GM12878 (cell line): ENCODE measurements at regions of chr11 and their contacts with region 1.

Region 1: DNA sequence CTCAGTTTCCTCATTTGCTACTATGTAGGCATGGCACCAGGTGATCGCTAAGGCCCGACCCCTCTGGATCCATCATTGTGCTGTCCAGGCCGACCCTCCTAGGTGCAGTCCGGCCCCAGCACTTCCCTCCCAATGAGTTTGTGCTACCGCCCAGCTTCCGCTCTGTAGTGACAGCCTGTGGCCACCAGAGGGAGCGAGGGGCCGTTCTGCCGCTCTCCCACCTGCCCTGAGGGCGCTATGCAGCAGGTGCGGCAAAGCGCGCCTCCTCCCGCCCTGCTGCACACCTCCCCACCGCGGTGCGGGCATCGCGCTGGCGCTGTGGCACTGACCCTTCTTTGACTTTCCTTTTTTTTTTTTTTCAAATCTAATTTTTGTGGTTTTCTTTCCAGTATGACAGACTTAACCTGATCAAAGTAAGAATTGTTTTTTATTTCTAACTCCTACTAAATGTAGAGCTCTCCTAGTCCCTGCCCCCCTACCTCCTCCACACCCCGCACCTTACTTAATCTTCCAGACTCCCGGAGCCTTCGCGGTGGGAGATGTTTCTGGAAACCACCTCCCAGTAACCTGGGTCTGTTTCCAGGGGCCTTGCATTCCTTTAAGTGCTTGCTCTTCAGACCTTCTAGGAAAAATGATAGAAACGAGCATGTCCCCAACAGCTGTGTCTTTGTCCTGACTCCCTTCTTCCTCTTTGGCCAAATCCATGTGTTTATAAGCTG is 73.7 kb downstream of the SCN3B start:
- DNase-seq: no peak
- ATAC-seq: peak; percentile 93
- H3K4me3 ChIP-seq: no peak overlapping the region
- H3K27ac ChIP-seq: no peak overlapping the region
- H3K4me1 ChIP-seq: peaks cover 9% of the 10 kb centered on the region
- H3K27me3 ChIP-seq: no peaks in the 10 kb centered on the region
- CTCF ChIP-seq: peak; percentile 94 to 100 (median 96)
- EP300 ChIP-seq: no peak
- POLR2A ChIP-seq: no peak
- RAD21 ChIP-seq: peak; percentile 71

Region 2: GRCh38 chr11:123110356-123110755 is 470.4 kb before region 1 on chr11:
- CTCF ChIA-PET with region 1: interaction called, 5 read pairs
- POLR2A ChIA-PET with region 1: no interaction called
- RAD21 ChIA-PET with region 1: no interaction called
- SMC1A ChIA-PET with region 1: no interaction called
- in situ Hi-C with region 1: no loop called
- intact Hi-C with region 1: loop called (anchors 5 kb)
- DNase-seq: no peak
- ATAC-seq: no peak
- H3K4me3 ChIP-seq: no peak overlapping the region
- H3K27ac ChIP-seq: no peak overlapping the region
- H3K4me1 ChIP-seq: no peaks in the 10 kb centered on the region
- H3K27me3 ChIP-seq: peaks cover 0 to 3% of the 10 kb centered on the region in 2 experiments; a peak in 2 of 4 replicates
- CTCF ChIP-seq: no peak
- EP300 ChIP-seq: no peak
- POLR2A ChIP-seq: no peak
- RAD21 ChIP-seq: no peak

Region 3: GRCh38 chr11:123505546-123506299 is 75.0 kb before region 1 on chr11:
- CTCF ChIA-PET with region 1: interaction called, 42 read pairs
- POLR2A ChIA-PET with region 1: interaction called, 3 read pairs
- RAD21 ChIA-PET with region 1: interaction called, 5 read pairs
- SMC1A ChIA-PET with region 1: interaction called, 13 read pairs
- in situ Hi-C with region 1: no loop called
- intact Hi-C with region 1: no loop called
- DNase-seq: no peak
- ATAC-seq: peak; percentile 81
- H3K4me3 ChIP-seq: no peak overlapping the region
- H3K27ac ChIP-seq: no peak overlapping the region
- H3K4me1 ChIP-seq: peaks cover 13% of the 10 kb centered on the region
- H3K27me3 ChIP-seq: no peaks in the 10 kb centered on the region
- CTCF ChIP-seq: no peak
- EP300 ChIP-seq: no peak
- POLR2A ChIP-seq: no peak
- RAD21 ChIP-seq: no peak

Region 4: DNA sequence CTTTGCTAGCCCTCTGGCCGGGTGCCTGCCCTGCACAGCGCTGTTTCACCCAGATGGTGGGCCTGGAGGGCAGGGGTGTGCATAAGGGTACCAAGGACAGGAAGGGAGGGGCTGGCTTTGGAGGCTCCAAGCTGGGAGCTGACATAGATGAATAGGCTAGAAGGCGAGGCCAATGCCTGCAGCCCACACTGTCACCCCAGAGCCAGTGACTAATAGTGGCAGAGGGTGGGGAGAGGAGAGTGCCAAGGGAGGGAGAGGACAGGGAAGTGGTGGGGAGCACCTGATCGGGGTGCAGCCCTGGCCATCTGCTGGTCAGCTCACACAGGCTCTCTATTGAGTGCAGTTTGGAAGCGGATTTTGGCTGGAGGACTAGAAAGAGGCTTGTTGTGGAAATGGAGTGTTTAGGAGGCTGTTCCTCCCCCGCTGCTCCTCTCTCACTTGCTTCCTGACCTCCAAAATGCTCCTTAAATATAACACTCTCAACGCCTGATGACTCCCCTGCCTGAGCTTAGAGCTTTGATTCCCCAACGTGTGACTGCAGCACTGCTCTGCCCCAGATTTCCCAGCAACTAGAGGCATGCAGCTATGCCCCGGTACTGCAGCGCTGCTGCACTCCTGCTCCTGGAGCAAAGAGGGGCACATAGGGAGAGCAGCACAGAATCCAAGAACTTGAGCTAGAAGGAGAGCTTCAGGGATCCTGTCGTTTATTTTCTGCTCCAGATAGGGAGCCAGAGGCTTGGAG is 61.5 kb before region 1 on chr11:
- CTCF ChIA-PET with region 1: interaction called, 27 read pairs
- POLR2A ChIA-PET with region 1: no interaction called
- RAD21 ChIA-PET with region 1: interaction called, 23 read pairs
- SMC1A ChIA-PET with region 1: interaction called, 30 read pairs
- in situ Hi-C with region 1: no loop called
- intact Hi-C with region 1: no loop called
- DNase-seq: no peak
- ATAC-seq: peak; percentile 18
- H3K4me3 ChIP-seq: no peak overlapping the region
- H3K27ac ChIP-seq: no peak overlapping the region
- H3K4me1 ChIP-seq: peaks cover 25% of the 10 kb centered on the region
- H3K27me3 ChIP-seq: no peaks in the 10 kb centered on the region
- CTCF ChIP-seq: no peak
- EP300 ChIP-seq: no peak
- POLR2A ChIP-seq: no peak
- RAD21 ChIP-seq: no peak

Region 5: GRCh38 chr11:123560006-123560405 is 20.7 kb before region 1 on chr11:
- CTCF ChIA-PET with region 1: interaction called, 33 read pairs
- POLR2A ChIA-PET with region 1: no interaction called
- RAD21 ChIA-PET with region 1: interaction called, 14 read pairs
- SMC1A ChIA-PET with region 1: interaction called, 11 read pairs
- in situ Hi-C with region 1: no loop called
- intact Hi-C with region 1: no loop called
- DNase-seq: no peak
- ATAC-seq: peak; percentile 73
- H3K4me3 ChIP-seq: peak overlapping the region; percentile 15; the same call in 1 of the 2 replicates
- H3K27ac ChIP-seq: no peak overlapping the region
- H3K4me1 ChIP-seq: peaks cover 14% of the 10 kb centered on the region
- H3K27me3 ChIP-seq: no peaks in the 10 kb centered on the region
- CTCF ChIP-seq: no peak
- EP300 ChIP-seq: no peak
- POLR2A ChIP-seq: peak; percentile 44; the same call in 1 of the 2 replicates
- RAD21 ChIP-seq: no peak

Region 6: DNA sequence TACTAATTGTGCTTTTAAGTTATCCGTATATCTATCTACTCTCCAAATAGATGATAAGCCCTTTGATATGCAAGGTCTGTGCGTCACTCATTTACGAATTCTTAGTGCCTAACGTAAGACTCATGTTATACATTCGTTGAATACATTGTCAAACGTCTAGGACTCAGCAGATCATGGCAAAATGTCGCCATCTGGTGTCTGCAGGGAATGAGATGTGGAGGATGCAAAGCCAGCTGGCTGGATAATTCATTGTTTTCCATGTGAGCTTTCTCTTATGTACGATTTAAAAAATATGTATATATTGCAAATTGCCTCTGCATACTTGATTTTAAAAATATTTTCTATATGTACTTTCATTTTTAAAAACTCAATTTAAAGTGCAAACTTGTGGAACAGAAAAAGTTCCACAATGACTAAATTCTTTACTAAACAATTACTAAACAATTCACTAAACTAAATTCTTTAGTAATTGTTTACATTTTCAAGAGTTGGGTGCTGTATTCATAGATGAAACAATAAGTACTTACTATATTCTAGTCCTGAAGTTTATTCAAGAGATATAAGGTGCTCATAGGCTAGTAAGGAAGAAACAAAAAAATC is 127.0 kb after region 1 on chr11:
- CTCF ChIA-PET with region 1: interaction called, 62 read pairs
- POLR2A ChIA-PET with region 1: interaction called, 3 read pairs
- RAD21 ChIA-PET with region 1: interaction called, 24 read pairs
- SMC1A ChIA-PET with region 1: interaction called, 18 read pairs
- in situ Hi-C with region 1: loop called (anchors 5 kb)
- intact Hi-C with region 1: loop called (anchors 1 kb)
- DNase-seq: peak; percentile 30
- ATAC-seq: peak; percentile 90
- H3K4me3 ChIP-seq: no peak overlapping the region
- H3K27ac ChIP-seq: no peak overlapping the region
- H3K4me1 ChIP-seq: no peaks in the 10 kb centered on the region
- H3K27me3 ChIP-seq: peaks cover 0 to 2% of the 10 kb centered on the region in 2 experiments; a peak in 1 of 4 replicates
- CTCF ChIP-seq: peak; percentile 63 to 82 (median 70)
- EP300 ChIP-seq: no peak
- POLR2A ChIP-seq: no peak
- RAD21 ChIP-seq: peak; percentile 87